ENCODE measurements at regions of chr1 and their contacts with region 1.

Region 1: DNA sequence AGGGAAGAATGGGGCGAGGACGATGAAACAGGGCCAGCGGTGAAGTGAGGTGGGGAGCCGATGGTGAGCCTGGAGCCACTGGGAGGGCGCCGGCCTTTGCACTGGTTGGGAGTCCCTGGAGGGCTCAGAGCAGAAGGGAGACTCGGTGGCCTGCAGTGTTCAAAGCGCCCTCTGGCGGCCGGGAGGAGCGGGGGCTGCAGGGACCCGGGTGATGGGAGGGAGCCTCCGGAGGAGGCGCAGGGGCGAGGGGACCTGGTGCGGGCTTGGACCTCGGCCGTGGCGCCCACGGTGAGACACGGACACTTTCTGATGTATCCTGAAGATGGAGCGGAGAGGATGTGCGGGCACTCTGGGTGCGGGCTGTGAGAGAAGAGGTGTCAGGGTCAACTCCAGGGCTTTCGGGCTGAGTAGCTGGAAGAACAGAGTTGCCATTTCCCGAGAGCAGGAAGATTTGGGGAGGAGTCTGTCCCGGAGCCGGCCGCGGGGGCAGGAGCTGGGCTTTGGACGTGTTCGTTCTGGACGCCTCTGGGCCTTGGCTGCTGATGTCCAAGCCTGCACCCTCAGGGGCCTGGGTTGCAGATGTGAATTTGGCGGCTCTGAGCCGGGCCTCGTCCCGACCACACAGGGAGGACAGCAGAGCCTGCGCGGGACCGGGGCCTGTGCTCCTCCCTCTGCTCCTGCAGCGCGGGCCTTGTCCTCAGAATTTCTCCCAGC is 29.7 kb downstream of the HEYL start:
- DNase-seq: peak in 1 of 2 experiments; percentile 72
- H3K4me3 ChIP-seq: no peak overlapping the region
- H3K27ac ChIP-seq: no peak overlapping the region
- H3K4me1 ChIP-seq: peaks cover 6% of the 10 kb centered on the region; the same call in 1 of the 2 replicates
- H3K27me3 ChIP-seq: no peaks in the 10 kb centered on the region
- CTCF ChIP-seq: peak; percentile 85

Region 2: GRCh38 chr1:39110325-39110851 is 499.4 kb before region 1 on chr1:
- CTCF ChIA-PET with region 1: interaction called, 10 read pairs
- POLR2A ChIA-PET with region 1: no interaction called
- intact Hi-C with region 1: no loop called
- DNase-seq: no peak
- H3K4me3 ChIP-seq: peak overlapping the region; percentile 3; the same call in 1 of the 2 replicates
- H3K27ac ChIP-seq: peak overlapping the region; percentile 75
- H3K4me1 ChIP-seq: peaks cover 56% of the 10 kb centered on the region
- H3K27me3 ChIP-seq: no peaks in the 10 kb centered on the region
- CTCF ChIP-seq: no peak

Region 3: DNA sequence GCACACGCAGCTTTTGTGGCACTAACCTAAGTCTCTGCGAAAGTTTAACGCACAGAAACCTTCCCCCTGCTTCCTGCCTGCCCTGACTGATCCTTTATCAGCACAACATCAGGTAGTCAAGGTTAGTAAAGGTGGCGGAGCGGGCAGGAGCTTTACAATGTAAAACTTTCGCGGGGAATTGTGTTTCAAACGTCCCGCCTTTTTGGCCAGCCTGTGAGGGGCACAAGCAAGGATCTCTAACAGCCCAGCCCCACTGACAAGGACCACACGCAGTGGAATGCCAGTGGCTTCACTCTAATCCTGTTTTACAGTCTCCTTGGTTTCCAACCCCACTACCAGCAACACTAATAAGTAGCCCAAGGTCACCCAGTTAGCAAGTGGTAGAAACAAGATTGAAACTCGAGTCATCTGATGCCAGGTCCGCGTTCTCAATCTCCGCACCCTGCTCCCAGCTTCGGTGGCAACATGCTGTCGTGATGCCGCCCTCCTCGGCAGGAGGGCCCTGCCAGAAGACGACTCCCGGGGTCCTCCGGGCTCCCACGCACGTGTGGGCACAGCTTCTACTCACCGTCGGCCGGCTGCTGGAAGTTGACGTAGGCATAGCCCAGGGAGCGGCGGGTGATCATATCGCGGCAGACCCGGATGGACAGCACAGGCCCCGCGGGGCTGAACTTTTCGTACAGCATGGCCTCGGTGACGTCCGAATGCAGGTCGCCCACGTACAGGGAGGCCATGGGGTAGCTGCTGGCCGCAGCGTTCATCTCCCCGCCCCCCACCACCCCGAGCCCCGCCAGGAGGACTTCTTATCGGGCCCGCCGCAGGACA is 34.4 kb before region 1 on chr1:
- CTCF ChIA-PET with region 1: interaction called, 7 read pairs
- POLR2A ChIA-PET with region 1: interaction called, 19 read pairs
- intact Hi-C with region 1: loop called (anchors 1 kb)
- DNase-seq: peak in 1 of 2 experiments; percentile 33
- H3K4me3 ChIP-seq: peak overlapping the region; percentile 76
- H3K27ac ChIP-seq: 0 out of 2 replicates have a peak overlapping the region, but pooled peaks have one; percentile 39
- H3K4me1 ChIP-seq: peaks cover 26% of the 10 kb centered on the region
- H3K27me3 ChIP-seq: no peaks in the 10 kb centered on the region
- CTCF ChIP-seq: no peak

Region 4: DNA sequence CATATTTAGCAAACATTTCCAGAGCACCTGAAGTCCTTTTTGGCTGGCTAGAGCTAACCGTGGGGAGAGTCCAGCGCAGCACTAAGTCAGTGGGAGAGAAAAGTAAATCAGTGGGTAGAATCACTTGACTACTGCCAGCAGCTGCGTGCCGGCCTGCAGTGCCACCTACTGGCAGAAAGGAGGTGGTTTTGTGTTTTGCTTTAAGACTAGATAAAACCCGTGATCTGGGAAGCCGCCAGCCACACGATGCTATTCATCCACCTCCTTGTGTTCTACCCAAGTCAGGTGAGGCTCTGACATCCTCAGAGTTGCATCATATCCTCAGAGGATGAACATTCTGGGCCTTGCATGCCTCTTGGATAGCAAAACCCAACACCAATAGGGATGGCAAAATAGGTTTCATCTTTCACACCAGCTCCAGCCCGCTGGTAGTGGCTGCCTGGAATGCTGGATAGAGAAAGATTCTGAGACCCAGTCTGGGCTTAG is 43.8 kb after region 1 on chr1:
- CTCF ChIA-PET with region 1: interaction called, 34 read pairs
- POLR2A ChIA-PET with region 1: no interaction called
- intact Hi-C with region 1: loop called (anchors 1 kb)
- DNase-seq: peak in 1 of 2 experiments; percentile 74
- H3K4me3 ChIP-seq: no peak overlapping the region
- H3K27ac ChIP-seq: no peak overlapping the region
- H3K4me1 ChIP-seq: no peaks in the 10 kb centered on the region
- H3K27me3 ChIP-seq: no peaks in the 10 kb centered on the region
- CTCF ChIP-seq: peak; percentile 92

Region 5: GRCh38 chr1:39720094-39720999 is 110.6 kb after region 1 on chr1:
- CTCF ChIA-PET with region 1: interaction called, 8 read pairs
- POLR2A ChIA-PET with region 1: interaction called, 3 read pairs
- intact Hi-C with region 1: loop called (anchors 1 kb)
- DNase-seq: peak; percentile 6 to 61
- H3K4me3 ChIP-seq: no peak overlapping the region
- H3K27ac ChIP-seq: no peak overlapping the region
- H3K4me1 ChIP-seq: no peaks in the 10 kb centered on the region
- H3K27me3 ChIP-seq: peaks cover 5% of the 10 kb centered on the region; the same call in 1 of the 2 replicates
- CTCF ChIP-seq: peak; percentile 89

Region 6: DNA sequence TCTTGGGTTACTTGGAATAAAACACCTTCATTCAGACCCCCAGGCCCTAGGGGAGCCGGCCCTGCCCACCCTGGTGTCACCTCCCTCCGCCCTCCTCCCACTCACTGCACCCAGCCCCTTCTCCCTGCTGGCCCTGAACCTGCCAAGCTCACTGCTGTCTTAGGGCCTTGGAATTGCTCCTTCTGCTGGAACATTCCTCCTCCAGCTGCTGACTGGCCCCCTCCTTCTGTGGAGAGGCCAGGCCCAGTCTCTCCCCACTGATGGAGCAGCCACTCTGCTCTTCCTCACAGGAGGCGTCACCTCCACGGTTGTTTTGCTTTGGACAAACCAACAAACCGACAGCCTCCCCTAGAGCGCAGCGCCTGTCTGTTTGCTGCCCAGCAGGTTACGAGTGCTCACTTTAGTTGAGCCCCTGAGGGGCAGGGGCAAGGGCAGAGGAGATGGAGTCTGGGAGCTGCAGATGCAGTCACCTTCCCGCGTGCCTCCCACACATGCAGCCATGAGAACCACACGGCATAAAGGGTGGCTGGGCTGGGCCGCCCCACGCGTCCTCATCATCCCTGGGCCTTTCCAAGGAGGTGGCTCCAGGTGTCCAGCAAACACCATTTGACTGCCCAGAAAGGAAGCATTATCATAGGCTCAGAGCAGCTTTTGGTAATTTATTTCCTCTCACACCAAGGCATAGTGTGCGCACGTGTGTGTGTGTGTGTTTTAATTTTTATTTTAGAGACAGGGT is 151.9 kb after region 1 on chr1:
- CTCF ChIA-PET with region 1: no interaction called
- POLR2A ChIA-PET with region 1: no interaction called
- intact Hi-C with region 1: no loop called
- DNase-seq: no peak
- H3K4me3 ChIP-seq: no peak overlapping the region
- H3K27ac ChIP-seq: no peak overlapping the region
- H3K4me1 ChIP-seq: no peaks in the 10 kb centered on the region
- H3K27me3 ChIP-seq: no peaks in the 10 kb centered on the region
- CTCF ChIP-seq: no peak

Region 7: GRCh38 chr1:39886757-39887231 is 277.0 kb after region 1 on chr1:
- CTCF ChIA-PET with region 1: no interaction called
- POLR2A ChIA-PET with region 1: no interaction called
- intact Hi-C with region 1: no loop called
- DNase-seq: no peak
- H3K4me3 ChIP-seq: no peak overlapping the region
- H3K27ac ChIP-seq: no peak overlapping the region
- H3K4me1 ChIP-seq: peaks cover 20% of the 10 kb centered on the region
- H3K27me3 ChIP-seq: no peaks in the 10 kb centered on the region
- CTCF ChIP-seq: no peak

Region 8: DNA sequence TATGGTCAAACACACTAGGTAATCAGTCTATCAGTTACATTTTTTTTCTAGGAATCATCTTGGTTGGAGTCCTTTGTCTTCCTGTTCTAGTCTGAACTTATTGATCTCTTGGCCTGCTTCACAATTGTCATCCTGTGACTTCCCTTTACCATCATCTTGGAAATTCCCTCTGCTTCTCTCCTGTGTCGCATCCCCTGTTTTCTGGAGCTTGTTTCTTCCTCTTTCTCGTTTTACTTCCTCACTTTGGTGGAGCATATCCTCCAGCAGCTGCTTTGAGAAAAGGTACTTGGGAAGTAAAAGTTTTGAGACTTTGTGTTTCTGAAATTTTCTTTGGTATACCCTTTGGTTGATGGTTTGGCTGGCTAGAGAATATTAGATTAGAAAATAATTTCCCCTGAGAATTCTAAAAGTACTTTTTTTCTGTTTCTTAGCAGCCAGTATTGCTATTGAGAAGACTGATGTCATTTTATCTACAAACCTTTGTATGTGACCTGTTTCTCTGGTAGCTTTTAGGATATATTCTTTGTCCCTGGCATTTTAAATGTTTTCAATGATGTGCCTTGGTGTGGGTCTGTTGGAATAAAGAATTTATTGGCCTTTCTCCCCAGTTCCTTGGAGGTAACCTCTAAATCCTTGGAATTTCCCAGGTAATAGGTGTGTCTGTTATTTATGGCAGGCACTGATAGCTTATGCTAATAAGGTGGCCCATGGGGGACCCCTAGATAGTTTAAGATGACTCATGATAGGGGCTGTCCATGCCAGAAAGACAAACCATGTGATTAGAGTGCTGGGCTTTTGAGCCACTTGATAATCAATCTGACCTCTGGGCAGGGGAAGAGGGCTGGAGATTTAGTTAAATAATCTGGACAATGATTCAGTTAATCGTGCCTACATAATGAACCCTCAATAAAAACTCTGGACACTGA is 298.0 kb after region 1 on chr1:
- CTCF ChIA-PET with region 1: interaction called, 10 read pairs
- POLR2A ChIA-PET with region 1: no interaction called
- intact Hi-C with region 1: no loop called
- DNase-seq: no peak
- H3K4me3 ChIP-seq: no peak overlapping the region
- H3K27ac ChIP-seq: no peak overlapping the region
- H3K4me1 ChIP-seq: 0 out of 2 replicates have a peak, but pooled peaks cover 6% of the 10 kb centered on the region
- H3K27me3 ChIP-seq: 0 out of 2 replicates have a peak, but pooled peaks cover 4% of the 10 kb centered on the region
- CTCF ChIP-seq: no peak

Region 9: GRCh38 chr1:40090652-40091355 is 481.0 kb after region 1 on chr1:
- CTCF ChIA-PET with region 1: no interaction called
- POLR2A ChIA-PET with region 1: interaction called, 32 read pairs
- intact Hi-C with region 1: no loop called
- DNase-seq: no peak
- H3K4me3 ChIP-seq: no peak overlapping the region
- H3K27ac ChIP-seq: peak overlapping the region; percentile 35; the same call in 1 of the 2 replicates
- H3K4me1 ChIP-seq: peaks cover 39% of the 10 kb centered on the region
- H3K27me3 ChIP-seq: no peaks in the 10 kb centered on the region
- CTCF ChIP-seq: no peak

Measured in PC-9 (cell line).